Esophagus muscularis mucosa (tissue), 4 donors: ENCODE measurements at regions of chr13 and their contacts with region 1.

Region 1: GRCh38 chr13:67224148-67224846 is 5.8 kb downstream of the PCDH9 start:
- DNase-seq: no peak
- H3K4me3 ChIP-seq: peak overlapping the region; percentile 35 to 89 (median 48)
- H3K27ac ChIP-seq: peak overlapping the region in 2 of 4 donors; percentile 25 to 27
- H3K4me1 ChIP-seq: peaks cover 3 to 78% (median 56%) of the 10 kb centered on the region in 4 donors
- H3K27me3 ChIP-seq: no peaks in the 10 kb centered on the region
- CTCF ChIP-seq: peak; percentile 69 to 70 (median 70)
- EP300 ChIP-seq: no peak
- POLR2A ChIP-seq: no peak

Region 2: GRCh38 chr13:65656740-65657329 is 1567.5 kb before region 1 on chr13:
- intact Hi-C with region 1: loop called (anchors 10 kb)
- DNase-seq: no peak
- H3K4me3 ChIP-seq: no peak overlapping the region
- H3K27ac ChIP-seq: no peak overlapping the region
- H3K4me1 ChIP-seq: no peaks in the 10 kb centered on the region
- H3K27me3 ChIP-seq: no peaks in the 10 kb centered on the region
- CTCF ChIP-seq: peak; percentile 46 to 61 (median 53)
- EP300 ChIP-seq: no peak
- POLR2A ChIP-seq: no peak

Region 3: DNA sequence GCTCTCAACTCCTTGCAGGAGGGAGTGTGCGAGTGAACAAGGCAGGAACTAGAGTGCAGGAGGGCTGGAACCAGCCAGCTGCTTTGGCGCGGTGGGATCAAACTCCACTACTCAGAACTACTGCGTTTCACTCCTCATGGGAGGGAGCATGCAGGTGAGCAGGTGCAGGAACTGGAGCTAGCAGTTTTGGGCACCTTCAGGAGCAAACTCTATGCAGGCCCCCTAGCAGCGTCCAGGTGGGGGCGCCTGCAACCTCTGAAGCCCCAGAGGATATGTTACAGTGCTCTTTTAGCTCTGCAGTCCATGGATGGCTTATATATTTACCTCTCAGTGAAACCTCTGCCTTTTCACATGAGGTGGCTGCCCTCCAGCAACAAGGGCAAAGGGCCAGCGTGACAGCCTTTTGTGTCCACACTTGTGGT is 1297.5 kb before region 1 on chr13:
- intact Hi-C with region 1: loop called (anchors 10 kb)
- DNase-seq: no peak
- H3K4me3 ChIP-seq: no peak overlapping the region
- H3K27ac ChIP-seq: no peak overlapping the region
- H3K4me1 ChIP-seq: peaks cover 0 to 8% (median 0%) of the 10 kb centered on the region in 4 donors
- H3K27me3 ChIP-seq: no peaks in the 10 kb centered on the region
- CTCF ChIP-seq: peak; percentile 27 to 47 (median 35)
- EP300 ChIP-seq: no peak
- POLR2A ChIP-seq: no peak

Region 4: GRCh38 chr13:66689628-66690027 is 534.7 kb before region 1 on chr13:
- intact Hi-C with region 1: loop called (anchors 10 kb)
- DNase-seq: no peak
- H3K4me3 ChIP-seq: no peak overlapping the region
- H3K27ac ChIP-seq: no peak overlapping the region
- H3K4me1 ChIP-seq: peaks cover 0 to 14% (median 3%) of the 10 kb centered on the region in 4 donors
- H3K27me3 ChIP-seq: no peaks in the 10 kb centered on the region
- CTCF ChIP-seq: peak; percentile 28 to 37 (median 33)
- EP300 ChIP-seq: no peak
- POLR2A ChIP-seq: no peak

Region 5: DNA sequence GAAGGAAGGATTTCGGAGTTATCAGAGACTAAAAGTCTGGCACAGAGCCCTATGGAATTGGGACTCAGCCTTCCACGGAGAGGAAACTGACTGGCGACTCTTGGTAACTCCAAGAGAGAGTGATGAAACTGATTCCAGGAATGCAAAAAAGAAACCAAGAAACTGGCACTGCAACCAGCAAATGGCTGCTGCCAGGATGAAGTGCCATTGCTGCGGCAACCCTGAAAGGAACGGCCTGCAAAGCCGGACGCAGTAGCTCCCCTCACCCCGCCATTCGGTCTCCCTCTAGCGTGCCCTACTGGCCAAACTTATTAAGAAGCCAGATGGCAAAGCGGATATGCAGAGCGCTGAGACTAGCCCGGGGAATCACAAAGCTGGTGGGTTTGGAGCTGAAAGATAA is 230.2 kb before region 1 on chr13:
- intact Hi-C with region 1: loop called (anchors 10 kb)
- DNase-seq: no peak
- H3K4me3 ChIP-seq: peak overlapping the region; percentile 33 to 40 (median 38)
- H3K27ac ChIP-seq: peak overlapping the region in 3 of 4 donors; percentile 46 to 63 (median 54)
- H3K4me1 ChIP-seq: peaks cover 0 to 29% (median 28%) of the 10 kb centered on the region in 4 donors
- H3K27me3 ChIP-seq: no peaks in the 10 kb centered on the region
- CTCF ChIP-seq: peak; percentile 61 to 74 (median 66)
- EP300 ChIP-seq: no peak
- POLR2A ChIP-seq: no peak

Region 6: GRCh38 chr13:67075239-67075638 is 149.1 kb before region 1 on chr13:
- intact Hi-C with region 1: loop called (anchors 2 kb)
- DNase-seq: no peak
- H3K4me3 ChIP-seq: peak overlapping the region in 2 of 4 donors; percentile 6 to 11
- H3K27ac ChIP-seq: no peak overlapping the region
- H3K4me1 ChIP-seq: peaks cover 0 to 4% (median 0%) of the 10 kb centered on the region in 4 donors
- H3K27me3 ChIP-seq: no peaks in the 10 kb centered on the region
- CTCF ChIP-seq: peak; percentile 31 to 36 (median 35)
- EP300 ChIP-seq: no peak
- POLR2A ChIP-seq: no peak

Region 7: DNA sequence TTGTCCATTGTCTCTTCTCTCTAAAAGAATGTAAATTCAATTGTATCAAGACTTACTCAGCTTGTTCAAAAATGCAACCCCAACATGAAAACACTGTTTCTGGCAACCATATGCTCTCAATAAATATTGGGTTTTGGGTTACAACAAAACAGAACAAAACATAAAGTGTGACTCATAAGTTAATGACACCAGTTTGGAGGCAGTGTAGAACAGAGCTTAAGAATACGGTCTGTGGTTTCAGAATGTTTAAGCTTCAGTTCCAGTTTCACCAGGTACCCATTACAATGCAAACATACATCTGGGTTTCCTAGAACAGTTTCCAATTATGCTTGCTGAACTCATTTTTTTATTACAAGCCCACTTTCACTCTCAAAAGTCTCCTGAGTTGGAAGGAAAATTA is 291.6 kb after region 1 on chr13:
- intact Hi-C with region 1: no loop called
- DNase-seq: no peak
- H3K4me3 ChIP-seq: no peak overlapping the region
- H3K27ac ChIP-seq: no peak overlapping the region
- H3K4me1 ChIP-seq: no peaks in the 10 kb centered on the region
- H3K27me3 ChIP-seq: no peaks in the 10 kb centered on the region
- CTCF ChIP-seq: no peak
- EP300 ChIP-seq: no peak
- POLR2A ChIP-seq: no peak